CD14-positive monocyte (primary cell): ENCODE measurements at regions of chr3 and their contacts with region 1.

Region 1: GRCh38 chr3:94009608-94010007 is 18.8 kb downstream of the STX19 start:
- DNase-seq: no peak
- H3K4me3 ChIP-seq: no peak overlapping the region
- H3K4me3 Mint-ChIP-seq: no peak overlapping the region
- H3K27ac ChIP-seq: no peak overlapping the region
- H3K27ac Mint-ChIP-seq: no peak overlapping the region
- H3K4me1 ChIP-seq: peaks cover 0 to 5% of the 10 kb centered on the region in 2 donors
- H3K4me1 Mint-ChIP-seq: peaks cover 10% of the 10 kb centered on the region
- H3K27me3 ChIP-seq: no peaks in the 10 kb centered on the region
- H3K27me3 Mint-ChIP-seq: no peaks in the 10 kb centered on the region
- CTCF ChIP-seq: no peak

Region 2: DNA sequence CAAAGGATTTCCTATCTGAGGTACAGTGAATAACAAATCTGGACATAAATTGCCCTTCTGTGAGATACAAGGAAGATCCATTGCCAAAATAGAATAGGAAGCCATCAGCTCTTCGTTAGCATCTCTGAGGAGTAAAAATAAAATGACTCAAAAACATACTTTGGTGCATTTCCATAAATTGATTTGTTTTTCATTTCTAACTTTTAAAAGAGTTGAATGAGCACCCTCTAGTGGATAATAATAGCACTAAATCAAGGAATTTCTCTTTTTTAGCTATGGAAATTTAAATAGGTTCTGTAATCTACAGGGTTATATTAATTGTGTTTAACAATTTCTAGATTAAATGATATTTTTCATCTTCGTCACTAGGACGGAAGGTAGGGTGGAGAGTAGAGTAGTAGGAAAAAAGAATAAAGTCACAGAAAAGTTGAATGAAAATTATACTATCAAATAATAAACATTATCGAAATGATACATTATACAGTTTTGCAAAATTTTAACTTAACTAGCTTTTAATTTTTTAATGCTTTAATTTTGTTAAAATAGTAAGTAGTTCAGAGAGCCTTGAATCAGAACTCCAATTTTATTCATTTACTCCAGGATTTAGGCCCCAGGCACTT is 59.7 kb after region 1 on chr3:
- intact Hi-C with region 1: loop called (anchors 5 kb)
- DNase-seq: peak in 1 of 3 donors; percentile 32
- H3K4me3 ChIP-seq: no peak overlapping the region
- H3K4me3 Mint-ChIP-seq: no peak overlapping the region
- H3K27ac ChIP-seq: peak overlapping the region in 1 of 2 donors; percentile 44
- H3K27ac Mint-ChIP-seq: peak overlapping the region in 1 of 7 donors; percentile 16
- H3K4me1 ChIP-seq: peaks cover 14 to 20% of the 10 kb centered on the region in 2 donors
- H3K4me1 Mint-ChIP-seq: peaks cover 22% of the 10 kb centered on the region
- H3K27me3 ChIP-seq: no peaks in the 10 kb centered on the region
- H3K27me3 Mint-ChIP-seq: no peaks in the 10 kb centered on the region
- CTCF ChIP-seq: peak; percentile 74